WTC11 (cell line): ENCODE measurements at regions of chr1 and their contacts with region 1.

Region 1: DNA sequence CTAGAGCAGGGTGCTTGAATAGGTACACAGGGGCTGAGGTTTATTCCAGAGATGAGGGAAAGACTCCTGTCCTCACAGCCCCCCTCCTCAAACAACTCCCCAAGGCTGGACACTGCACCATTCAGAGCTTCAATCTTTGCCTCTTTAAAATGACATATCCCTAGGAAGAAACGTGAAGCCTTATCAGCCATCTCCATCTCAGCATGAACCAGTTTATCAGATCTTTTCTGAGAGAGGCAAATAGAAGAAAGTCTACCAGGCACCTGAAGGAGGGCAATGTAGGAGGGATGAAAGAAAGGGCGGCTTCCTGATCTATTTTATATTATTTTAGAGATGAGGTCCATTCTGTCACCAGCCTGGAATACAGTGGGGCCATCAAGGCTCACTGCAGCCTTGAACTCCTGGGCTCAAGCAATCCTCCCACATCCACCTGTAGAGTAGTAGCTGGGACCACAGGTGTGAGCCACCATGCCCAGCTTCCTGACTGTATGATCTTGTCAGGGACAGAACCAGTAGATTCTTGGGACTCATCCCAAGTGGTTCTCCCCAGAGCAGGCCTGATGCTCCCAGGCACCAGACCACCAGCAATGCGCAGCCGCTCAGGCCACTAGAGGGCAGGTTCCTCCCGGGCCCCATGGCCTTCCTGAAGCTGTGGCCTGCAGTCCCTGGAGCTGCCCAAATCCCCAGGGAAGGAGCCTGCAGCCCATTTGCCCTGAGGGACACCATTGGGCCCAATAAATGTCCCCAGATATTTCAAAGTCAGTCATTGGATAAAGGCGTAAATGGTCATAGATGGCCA is 44.4 kb upstream of the GOLT1A start:
- DNase-seq: peak; percentile 86
- ATAC-seq: peak; percentile 71
- H3K4me3 Mint-ChIP-seq: no peak overlapping the region
- H3K27ac Mint-ChIP-seq: no peak overlapping the region
- H3K4me1 Mint-ChIP-seq: peaks cover 36% of the 10 kb centered on the region
- H3K27me3 Mint-ChIP-seq: no peaks in the 10 kb centered on the region
- CTCF ChIP-seq: peak; percentile 57

Region 2: GRCh38 chr1:204145033-204145504 is 113.1 kb before region 1 on chr1:
- CTCF ChIA-PET with region 1: no interaction called
- POLR2A ChIA-PET with region 1: no interaction called
- DNase-seq: no peak
- ATAC-seq: no peak
- H3K4me3 Mint-ChIP-seq: no peak overlapping the region
- H3K27ac Mint-ChIP-seq: no peak overlapping the region
- H3K4me1 Mint-ChIP-seq: peaks cover 40% of the 10 kb centered on the region
- H3K27me3 Mint-ChIP-seq: peaks cover 4% of the 10 kb centered on the region
- CTCF ChIP-seq: no peak

Region 3: GRCh38 chr1:204241050-204241449 is 17.1 kb before region 1 on chr1:
- CTCF ChIA-PET with region 1: interaction called, 12 read pairs
- POLR2A ChIA-PET with region 1: no interaction called
- DNase-seq: no peak
- ATAC-seq: peak; percentile 88
- H3K4me3 Mint-ChIP-seq: no peak overlapping the region
- H3K27ac Mint-ChIP-seq: no peak overlapping the region
- H3K4me1 Mint-ChIP-seq: no peaks in the 10 kb centered on the region
- H3K27me3 Mint-ChIP-seq: no peaks in the 10 kb centered on the region
- CTCF ChIP-seq: no peak

Region 4: GRCh38 chr1:204278254-204278653 is 20.1 kb after region 1 on chr1:
- CTCF ChIA-PET with region 1: interaction called, 37 read pairs
- POLR2A ChIA-PET with region 1: no interaction called
- DNase-seq: no peak
- ATAC-seq: no peak
- H3K4me3 Mint-ChIP-seq: no peak overlapping the region
- H3K27ac Mint-ChIP-seq: no peak overlapping the region
- H3K4me1 Mint-ChIP-seq: peaks cover 13% of the 10 kb centered on the region
- H3K27me3 Mint-ChIP-seq: no peaks in the 10 kb centered on the region
- CTCF ChIP-seq: no peak

Region 5: GRCh38 chr1:204285406-204286305 is 27.5 kb after region 1 on chr1:
- CTCF ChIA-PET with region 1: interaction called, 35 read pairs
- POLR2A ChIA-PET with region 1: no interaction called
- DNase-seq: no peak
- ATAC-seq: no peak
- H3K4me3 Mint-ChIP-seq: no peak overlapping the region
- H3K27ac Mint-ChIP-seq: no peak overlapping the region
- H3K4me1 Mint-ChIP-seq: peaks cover 34% of the 10 kb centered on the region
- H3K27me3 Mint-ChIP-seq: no peaks in the 10 kb centered on the region
- CTCF ChIP-seq: no peak

Region 6: GRCh38 chr1:204307334-204307883 is 49.3 kb after region 1 on chr1:
- CTCF ChIA-PET with region 1: interaction called, 15 read pairs
- POLR2A ChIA-PET with region 1: no interaction called
- DNase-seq: peak; percentile 64
- ATAC-seq: peak; percentile 85
- H3K4me3 Mint-ChIP-seq: peak overlapping the region; percentile 68
- H3K27ac Mint-ChIP-seq: peak overlapping the region; percentile 35; the same call in 1 of the 2 replicates
- H3K4me1 Mint-ChIP-seq: peaks cover 80% of the 10 kb centered on the region
- H3K27me3 Mint-ChIP-seq: peaks cover 4% of the 10 kb centered on the region
- CTCF ChIP-seq: no peak

Region 7: DNA sequence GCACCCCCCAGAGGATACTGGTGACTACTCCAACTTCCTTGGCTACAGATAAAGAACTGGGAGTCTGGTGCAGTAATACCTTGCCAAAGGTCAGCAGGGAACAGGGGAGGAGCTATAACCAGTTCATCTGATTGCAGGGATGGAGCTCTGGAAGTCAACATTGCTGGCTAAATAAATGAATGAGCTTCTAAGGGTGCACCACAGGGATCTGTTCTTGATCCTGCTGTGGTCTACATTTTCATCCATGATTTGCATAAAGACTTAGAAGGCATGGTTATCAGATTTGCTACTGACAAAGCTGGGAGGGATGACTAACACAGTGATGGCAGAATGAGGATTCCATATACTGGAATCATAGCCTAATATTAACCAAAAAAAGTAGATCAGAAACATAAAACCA is 83.2 kb after region 1 on chr1:
- CTCF ChIA-PET with region 1: interaction called, 11 read pairs
- POLR2A ChIA-PET with region 1: no interaction called
- DNase-seq: no peak
- ATAC-seq: no peak
- H3K4me3 Mint-ChIP-seq: no peak overlapping the region
- H3K27ac Mint-ChIP-seq: no peak overlapping the region
- H3K4me1 Mint-ChIP-seq: peaks cover 66% of the 10 kb centered on the region
- H3K27me3 Mint-ChIP-seq: peaks cover 12% of the 10 kb centered on the region
- CTCF ChIP-seq: no peak

Region 8: DNA sequence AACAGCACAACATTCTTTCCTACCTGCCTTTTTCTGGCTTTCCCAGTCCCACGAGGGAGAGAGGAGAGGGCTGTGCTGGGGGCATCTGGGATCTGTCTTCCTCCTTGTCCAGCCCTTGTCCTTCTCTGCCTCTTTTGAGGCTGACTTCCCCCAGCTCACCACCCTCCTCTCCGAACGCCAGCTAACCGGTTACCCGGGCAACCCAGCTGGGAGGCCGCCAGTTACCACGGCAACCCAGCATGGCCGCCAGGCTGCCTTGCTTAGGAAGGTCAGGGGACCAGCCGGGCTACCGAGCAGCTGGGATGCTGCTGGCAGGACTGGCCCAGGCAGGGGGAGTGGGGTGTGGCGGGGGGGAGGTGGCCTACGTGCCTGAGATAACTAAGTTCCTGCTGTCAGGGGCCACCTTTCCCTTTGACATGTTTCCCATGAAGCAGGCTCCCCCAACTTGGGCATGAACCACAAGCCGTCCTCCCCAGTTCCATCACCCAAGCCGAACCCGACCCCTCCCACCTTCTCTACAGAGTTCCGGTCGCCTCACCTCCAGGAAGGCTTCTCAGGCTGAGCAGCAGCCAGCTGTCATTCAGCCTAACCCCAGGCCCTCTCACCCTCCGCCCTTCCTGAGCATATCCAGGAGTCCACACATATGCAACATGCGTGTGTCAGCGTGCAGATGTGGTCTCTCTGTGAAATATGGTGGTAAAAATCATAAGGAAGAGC is 92.9 kb after region 1 on chr1:
- CTCF ChIA-PET with region 1: interaction called, 11 read pairs
- POLR2A ChIA-PET with region 1: no interaction called
- DNase-seq: peak; percentile 94
- ATAC-seq: peak; percentile 79
- H3K4me3 Mint-ChIP-seq: peak overlapping the region; percentile 51
- H3K27ac Mint-ChIP-seq: peak overlapping the region; percentile 54
- H3K4me1 Mint-ChIP-seq: peaks cover 32% of the 10 kb centered on the region
- H3K27me3 Mint-ChIP-seq: no peaks in the 10 kb centered on the region; the same call in 1 of the 2 replicates
- CTCF ChIP-seq: no peak